ENCODE measurements at regions of chr16 and their contacts with region 1.

Region 1: GRCh38 chr16:84672276-84673202 is 24.2 kb downstream of the KLHL36 start:
- DNase-seq: peak; percentile 81
- H3K4me3 Mint-ChIP-seq: no peak overlapping the region
- H3K27ac Mint-ChIP-seq: no peak overlapping the region
- H3K4me1 Mint-ChIP-seq: peaks cover 9% of the 10 kb centered on the region
- H3K27me3 Mint-ChIP-seq: peaks cover 10% of the 10 kb centered on the region

Region 2: GRCh38 chr16:84478172-84478947 is 194.2 kb before region 1 on chr16:
- CTCF ChIA-PET with region 1: no interaction called
- POLR2A ChIA-PET with region 1: no interaction called
- DNase-seq: no peak
- H3K4me3 Mint-ChIP-seq: no peak overlapping the region
- H3K27ac Mint-ChIP-seq: no peak overlapping the region
- H3K4me1 Mint-ChIP-seq: peaks cover 6% of the 10 kb centered on the region
- H3K27me3 Mint-ChIP-seq: no peaks in the 10 kb centered on the region

Region 3: GRCh38 chr16:84631886-84632285 is 40.7 kb before region 1 on chr16:
- CTCF ChIA-PET with region 1: no interaction called
- POLR2A ChIA-PET with region 1: no interaction called
- DNase-seq: no peak
- H3K4me3 Mint-ChIP-seq: no peak overlapping the region
- H3K27ac Mint-ChIP-seq: no peak overlapping the region
- H3K4me1 Mint-ChIP-seq: peaks cover 24% of the 10 kb centered on the region
- H3K27me3 Mint-ChIP-seq: peaks cover 46% of the 10 kb centered on the region

Region 4: DNA sequence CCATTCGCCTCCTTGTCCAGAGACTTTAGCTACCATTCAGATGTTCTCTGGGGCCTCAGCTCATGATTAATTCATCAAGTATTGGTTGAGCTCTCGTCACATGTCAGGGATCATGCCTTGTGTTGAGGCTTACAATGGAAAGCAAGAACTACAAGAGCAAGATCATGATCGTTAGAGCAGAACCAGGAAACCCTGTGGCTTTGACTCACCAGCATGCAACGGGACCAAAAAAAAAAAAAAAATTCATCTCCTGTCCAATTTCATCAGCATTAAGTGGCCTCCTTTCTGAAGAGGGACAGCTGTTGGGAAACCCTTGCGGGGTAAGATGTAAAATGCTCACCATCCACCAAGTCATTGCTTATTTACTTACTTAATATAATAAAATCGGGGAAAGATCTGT is 15.2 kb after region 1 on chr16:
- CTCF ChIA-PET with region 1: interaction called, 22 read pairs
- POLR2A ChIA-PET with region 1: interaction called, 3 read pairs
- DNase-seq: no peak
- H3K4me3 Mint-ChIP-seq: no peak overlapping the region
- H3K27ac Mint-ChIP-seq: no peak overlapping the region
- H3K4me1 Mint-ChIP-seq: peaks cover 17% of the 10 kb centered on the region
- H3K27me3 Mint-ChIP-seq: peaks cover 24% of the 10 kb centered on the region

Region 5: DNA sequence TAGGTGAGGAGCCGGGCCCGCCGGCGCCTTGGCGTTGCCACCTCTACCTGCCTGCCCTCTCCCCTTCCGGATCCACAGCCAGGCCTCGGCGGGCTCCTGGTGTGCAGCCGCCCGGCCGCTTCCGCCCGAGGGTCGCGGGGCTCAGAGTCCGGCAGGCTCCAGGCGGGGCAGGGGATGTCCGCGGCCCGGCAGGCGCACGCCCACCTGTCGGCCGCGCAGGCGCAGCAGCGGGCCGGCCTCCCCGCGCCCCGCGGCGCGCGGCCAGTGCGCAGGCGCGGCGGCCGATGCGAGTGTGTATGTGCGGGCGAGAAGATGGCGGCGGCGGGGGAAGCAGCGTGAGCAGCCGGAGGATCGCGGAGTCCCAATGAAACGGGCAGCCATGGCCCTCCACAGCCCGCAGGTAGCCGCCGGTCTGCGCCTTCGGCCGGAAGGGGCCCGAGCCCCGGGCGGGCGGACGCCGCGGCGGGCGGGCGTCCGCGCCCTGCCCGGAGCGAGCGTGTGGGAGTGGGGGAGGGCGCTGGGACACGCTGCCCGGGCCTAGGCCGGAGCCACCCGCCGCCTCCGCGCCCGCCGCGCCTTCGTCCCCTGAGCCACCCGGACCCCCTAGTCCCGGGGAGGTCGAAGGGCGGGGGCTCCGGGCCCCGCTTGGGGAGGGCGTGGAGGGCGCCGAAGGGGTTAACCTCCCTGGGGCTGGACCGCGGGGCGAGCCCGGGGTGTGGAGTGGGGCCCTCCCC is 27.3 kb after region 1 on chr16 and contains the start of gene USP10:
- CTCF ChIA-PET with region 1: interaction called, 19 read pairs
- POLR2A ChIA-PET with region 1: interaction called, 8 read pairs
- DNase-seq: peak; percentile 87
- H3K4me3 Mint-ChIP-seq: peak within 1 kb of the TSS; percentile 97
- H3K27ac Mint-ChIP-seq: peak within 1 kb of the TSS; percentile 94
- H3K4me1 Mint-ChIP-seq: peaks cover 41% of the 10 kb centered on the region
- H3K27me3 Mint-ChIP-seq: peaks cover 4% of the 10 kb centered on the region
- total RNA-seq, gene USP10: 92.2 to 94.4 TPM

Region 6: GRCh38 chr16:84720177-84720579 is 47.6 kb after region 1 on chr16:
- CTCF ChIA-PET with region 1: interaction called, 74 read pairs
- POLR2A ChIA-PET with region 1: no interaction called
- DNase-seq: no peak
- H3K4me3 Mint-ChIP-seq: no peak overlapping the region
- H3K27ac Mint-ChIP-seq: no peak overlapping the region
- H3K4me1 Mint-ChIP-seq: peaks cover 58% of the 10 kb centered on the region
- H3K27me3 Mint-ChIP-seq: no peaks in the 10 kb centered on the region

Region 7: GRCh38 chr16:84754353-84754856 is 81.9 kb after region 1 on chr16:
- CTCF ChIA-PET with region 1: interaction called, 14 read pairs
- POLR2A ChIA-PET with region 1: no interaction called
- DNase-seq: peak; percentile 75
- H3K4me3 Mint-ChIP-seq: peak overlapping the region; percentile 58
- H3K27ac Mint-ChIP-seq: peak overlapping the region; percentile 53
- H3K4me1 Mint-ChIP-seq: peaks cover 83% of the 10 kb centered on the region
- H3K27me3 Mint-ChIP-seq: no peaks in the 10 kb centered on the region

Region 8: GRCh38 chr16:84819644-84820324 is 147.2 kb after region 1 on chr16 and contains the start of gene CRISPLD2:
- CTCF ChIA-PET with region 1: no interaction called
- POLR2A ChIA-PET with region 1: no interaction called
- DNase-seq: peak; percentile 80
- H3K4me3 Mint-ChIP-seq: no peak within 1 kb of the TSS
- H3K27ac Mint-ChIP-seq: no peak within 1 kb of the TSS
- H3K4me1 Mint-ChIP-seq: peaks cover 6% of the 10 kb centered on the region
- H3K27me3 Mint-ChIP-seq: peaks cover 47% of the 10 kb centered on the region
- total RNA-seq, gene CRISPLD2: 0.18 to 0.23 TPM